CD4-positive, alpha-beta T cell (primary cell): ENCODE measurements at regions of chr2 and their contacts with region 1.

Region 1: GRCh38 chr2:98713332-98714015 is 17.5 kb downstream of the MGAT4A start:
- DNase-seq: no peak
- ATAC-seq: no peak
- H3K4me3 ChIP-seq: no peak overlapping the region
- H3K4me3 Mint-ChIP-seq: peak overlapping the region; percentile 62
- H3K27ac ChIP-seq: no peak overlapping the region
- H3K27ac Mint-ChIP-seq: peak overlapping the region; percentile 72
- H3K4me1 ChIP-seq: peaks cover 81% of the 10 kb centered on the region
- H3K4me1 Mint-ChIP-seq: peaks cover 96% of the 10 kb centered on the region
- H3K27me3 ChIP-seq: no peaks in the 10 kb centered on the region
- H3K27me3 Mint-ChIP-seq: no peaks in the 10 kb centered on the region
- CTCF ChIP-seq: no peak

Region 2: DNA sequence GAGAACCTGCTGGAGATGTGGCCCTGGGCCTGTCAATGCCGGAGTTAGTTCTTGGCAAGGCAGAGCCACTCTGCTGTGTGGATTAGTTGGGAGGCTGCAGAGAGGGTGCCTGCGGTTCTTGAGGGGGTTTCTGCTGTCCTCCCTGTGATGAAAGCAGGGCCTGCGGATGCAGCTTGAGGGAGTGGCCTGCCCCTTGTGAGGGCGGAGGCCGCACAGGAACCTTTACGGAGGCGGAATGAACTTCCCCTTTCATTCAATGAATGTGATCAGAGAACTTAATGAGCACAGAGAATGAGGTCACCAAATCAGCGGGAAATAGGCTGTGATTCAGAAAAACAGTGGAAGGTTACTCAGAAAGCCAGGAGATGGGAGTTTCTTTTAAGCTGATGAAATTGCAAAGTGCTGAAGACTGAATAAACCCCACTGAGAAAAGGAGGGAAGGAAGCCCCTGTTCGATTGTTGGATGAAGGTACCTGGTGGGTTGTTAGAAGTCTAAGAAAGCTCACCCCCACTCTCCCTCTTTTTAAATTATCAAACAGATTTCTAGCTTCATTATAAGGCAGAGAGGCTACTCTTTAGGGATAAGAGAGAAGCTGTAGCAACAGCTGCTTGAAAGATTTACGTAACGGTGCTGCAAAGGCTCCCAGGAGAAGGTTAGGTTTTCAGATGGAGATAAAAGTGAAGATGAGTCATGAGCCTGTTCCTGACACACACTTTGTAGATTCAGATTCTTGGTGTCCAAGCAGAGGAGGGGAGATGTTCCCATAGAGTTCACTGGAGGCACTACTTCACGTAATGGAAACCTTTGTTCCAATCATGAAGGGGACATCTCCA is 579.1 kb before region 1 on chr2:
- CTCF ChIA-PET with region 1: no interaction called
- POLR2A ChIA-PET with region 1: no interaction called
- intact Hi-C with region 1: loop called in 1 of 2 experiments (anchors 5 kb)
- DNase-seq: peak in 3 of 14 experiments; percentile 27 to 74 (median 65)
- ATAC-seq: no peak
- H3K4me3 ChIP-seq: no peak overlapping the region
- H3K4me3 Mint-ChIP-seq: no peak overlapping the region
- H3K27ac ChIP-seq: no peak overlapping the region
- H3K27ac Mint-ChIP-seq: no peak overlapping the region
- H3K4me1 ChIP-seq: peaks cover 3% of the 10 kb centered on the region
- H3K4me1 Mint-ChIP-seq: no peaks in the 10 kb centered on the region
- H3K27me3 ChIP-seq: peaks cover 0 to 5% of the 10 kb centered on the region in 2 experiments
- H3K27me3 Mint-ChIP-seq: peaks cover 22% of the 10 kb centered on the region
- CTCF ChIP-seq: no peak

Region 3: GRCh38 chr2:98669675-98670074 is 43.8 kb before region 1 on chr2:
- CTCF ChIA-PET with region 1: no interaction called
- POLR2A ChIA-PET with region 1: interaction called, 4 read pairs
- intact Hi-C with region 1: loop called in 1 of 2 experiments (anchors 5 kb)
- DNase-seq: no peak
- ATAC-seq: no peak
- H3K4me3 ChIP-seq: no peak overlapping the region
- H3K4me3 Mint-ChIP-seq: no peak overlapping the region
- H3K27ac ChIP-seq: no peak overlapping the region
- H3K27ac Mint-ChIP-seq: peak overlapping the region; percentile 92
- H3K4me1 ChIP-seq: peaks cover 22% of the 10 kb centered on the region
- H3K4me1 Mint-ChIP-seq: peaks cover 64% of the 10 kb centered on the region
- H3K27me3 ChIP-seq: no peaks in the 10 kb centered on the region
- H3K27me3 Mint-ChIP-seq: no peaks in the 10 kb centered on the region
- CTCF ChIP-seq: no peak

Region 4: DNA sequence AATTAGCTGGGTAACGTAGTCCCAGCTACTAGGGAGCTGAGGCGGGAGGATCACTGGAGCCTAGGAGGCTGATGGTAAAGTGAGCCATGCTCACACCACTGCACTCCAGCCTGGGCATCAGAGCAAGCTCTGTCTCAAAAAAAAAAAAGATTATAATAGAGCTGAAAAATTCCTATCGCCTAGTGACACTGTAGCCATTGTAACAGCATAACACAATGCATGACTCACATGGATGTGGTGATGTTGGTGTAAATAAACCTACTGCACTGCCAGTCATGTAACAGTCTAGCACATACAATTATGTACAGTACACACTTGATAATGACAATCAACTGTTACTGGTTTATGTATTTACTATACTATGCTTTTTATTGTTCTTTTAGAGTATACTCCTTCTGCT is 22.2 kb before region 1 on chr2:
- CTCF ChIA-PET with region 1: interaction called, 3 read pairs
- POLR2A ChIA-PET with region 1: interaction called, 3 read pairs
- intact Hi-C with region 1: loop called in 1 of 2 experiments (anchors 2 kb)
- DNase-seq: peak in 4 of 14 experiments; percentile 14 to 30 (median 25)
- ATAC-seq: peak; percentile 72
- H3K4me3 ChIP-seq: no peak overlapping the region
- H3K4me3 Mint-ChIP-seq: no peak overlapping the region
- H3K27ac ChIP-seq: peak overlapping the region in 1 of 2 donors; percentile 30
- H3K27ac Mint-ChIP-seq: peak overlapping the region; percentile 92
- H3K4me1 ChIP-seq: peaks cover 65% of the 10 kb centered on the region
- H3K4me1 Mint-ChIP-seq: peaks cover 92% of the 10 kb centered on the region
- H3K27me3 ChIP-seq: no peaks in the 10 kb centered on the region
- H3K27me3 Mint-ChIP-seq: no peaks in the 10 kb centered on the region
- CTCF ChIP-seq: no peak